ENCODE measurements at regions of chr12 and their contacts with region 1.

Region 1: DNA sequence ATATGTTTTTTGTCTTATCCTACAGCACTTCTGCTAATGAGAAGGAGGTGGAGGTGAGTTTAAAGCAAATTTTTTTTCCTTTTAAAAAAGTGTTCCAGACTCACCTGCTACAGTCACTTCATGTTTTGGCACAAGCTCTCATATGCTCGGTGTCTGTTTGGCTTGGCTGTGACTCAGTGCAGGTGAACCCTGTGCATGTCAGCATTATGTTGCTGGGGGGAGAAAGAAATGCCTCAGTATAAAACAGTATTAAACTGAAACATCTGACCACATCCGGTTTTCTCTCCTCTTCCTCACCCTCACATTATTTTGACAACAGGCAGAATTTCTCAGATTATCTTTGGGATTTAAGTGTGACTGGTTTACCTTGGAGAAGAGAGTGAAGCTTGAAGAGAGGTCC is 105.2 kb downstream of the DNAI7 start:
- DNase-seq: no peak
- ATAC-seq: peak; percentile 45
- H3K4me3 Mint-ChIP-seq: no peak overlapping the region
- H3K27ac Mint-ChIP-seq: peak overlapping the region; percentile 76
- H3K4me1 Mint-ChIP-seq: peaks cover 51% of the 10 kb centered on the region
- H3K27me3 Mint-ChIP-seq: no peaks in the 10 kb centered on the region
- CTCF ChIP-seq: no peak

Region 2: GRCh38 chr12:25101092-25101445 is 11.3 kb after region 1 on chr12:
- CTCF ChIA-PET with region 1: no interaction called
- POLR2A ChIA-PET with region 1: interaction called, 3 read pairs
- intact Hi-C with region 1: loop called (anchors 1 kb)
- DNase-seq: no peak
- ATAC-seq: peak; percentile 70
- H3K4me3 Mint-ChIP-seq: peak overlapping the region; percentile 17
- H3K27ac Mint-ChIP-seq: peak overlapping the region; percentile 71
- H3K4me1 Mint-ChIP-seq: peaks cover 14% of the 10 kb centered on the region
- H3K27me3 Mint-ChIP-seq: no peaks in the 10 kb centered on the region
- CTCF ChIP-seq: no peak

Region 3: DNA sequence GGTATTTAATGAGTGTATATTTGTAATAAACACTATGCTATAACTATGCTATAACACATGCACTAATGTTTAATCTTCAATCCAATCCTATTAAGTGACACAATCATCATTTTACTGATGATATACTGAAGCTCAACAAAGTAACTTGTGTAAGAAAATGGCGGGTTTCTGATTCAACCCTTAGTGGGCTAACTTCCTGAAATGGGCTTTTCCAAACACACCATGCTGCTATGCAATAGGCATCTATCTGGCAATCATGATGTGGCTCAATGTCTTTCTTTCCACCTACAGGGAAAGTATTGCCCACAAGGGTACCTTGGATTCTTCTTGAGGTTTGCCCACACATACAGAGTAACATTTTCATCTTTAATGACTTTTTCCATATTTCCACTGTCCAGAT is 56.9 kb after region 1 on chr12:
- CTCF ChIA-PET with region 1: no interaction called
- POLR2A ChIA-PET with region 1: no interaction called
- intact Hi-C with region 1: no loop called
- DNase-seq: no peak
- ATAC-seq: no peak
- H3K4me3 Mint-ChIP-seq: no peak overlapping the region
- H3K27ac Mint-ChIP-seq: no peak overlapping the region
- H3K4me1 Mint-ChIP-seq: no peaks in the 10 kb centered on the region
- H3K27me3 Mint-ChIP-seq: no peaks in the 10 kb centered on the region
- CTCF ChIP-seq: no peak

Region 4: GRCh38 chr12:25935355-25936144 is 845.8 kb after region 1 on chr12:
- CTCF ChIA-PET with region 1: no interaction called
- POLR2A ChIA-PET with region 1: no interaction called
- intact Hi-C with region 1: no loop called
- DNase-seq: no peak
- ATAC-seq: no peak
- H3K4me3 Mint-ChIP-seq: no peak overlapping the region
- H3K27ac Mint-ChIP-seq: no peak overlapping the region
- H3K4me1 Mint-ChIP-seq: peaks cover 7% of the 10 kb centered on the region
- H3K27me3 Mint-ChIP-seq: no peaks in the 10 kb centered on the region
- CTCF ChIP-seq: no peak

Measured in activated B cell treated with CpG ODN at 0.5 μM for 24 hours (primary cell).